Activated CD4-positive, alpha-beta T cell treated with anti-CD3 and anti-CD28 coated beads for 36 hours (primary cell): ENCODE measurements at regions of chr3 and their contacts with region 1.

Region 1: GRCh38 chr3:58237238-58237940 is at the start of gene ABHD6:
- DNase-seq: peak; percentile 88
- ATAC-seq: peak; percentile 81
- H3K4me3 Mint-ChIP-seq: peak within 1 kb of the TSS; percentile 82
- H3K27ac Mint-ChIP-seq: peak within 1 kb of the TSS; percentile 71
- H3K4me1 Mint-ChIP-seq: peaks cover 10% of the 10 kb centered on the region
- H3K27me3 Mint-ChIP-seq: peaks cover 3% of the 10 kb centered on the region
- total RNA-seq, gene ABHD6: 3.0 to 3.5 TPM

Region 2: DNA sequence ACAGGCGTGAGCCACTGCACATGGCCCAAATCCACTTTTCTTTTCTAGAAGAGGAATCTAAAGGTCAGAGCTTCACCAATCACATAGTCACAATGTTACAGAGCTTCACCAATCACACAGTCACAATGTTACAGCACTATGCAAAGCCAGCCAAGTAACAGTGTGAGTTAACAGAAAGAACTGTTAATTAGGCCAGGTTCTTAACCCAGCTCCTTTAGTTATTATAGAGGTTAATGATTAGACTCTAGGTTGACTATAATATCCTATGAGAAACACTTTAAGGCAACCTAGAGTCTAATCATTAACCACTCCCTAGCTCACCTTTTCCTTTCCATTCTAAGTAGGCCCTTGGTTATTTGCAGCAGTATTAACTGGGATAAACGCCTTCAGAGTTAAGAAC is 1608.3 kb before region 1 on chr3:
- CTCF ChIA-PET with region 1: no interaction called
- POLR2A ChIA-PET with region 1: no interaction called
- intact Hi-C with region 1: no loop called
- DNase-seq: no peak
- ATAC-seq: no peak
- H3K4me3 Mint-ChIP-seq: no peak overlapping the region
- H3K27ac Mint-ChIP-seq: no peak overlapping the region
- H3K4me1 Mint-ChIP-seq: peaks cover 5% of the 10 kb centered on the region
- H3K27me3 Mint-ChIP-seq: no peaks in the 10 kb centered on the region

Region 3: DNA sequence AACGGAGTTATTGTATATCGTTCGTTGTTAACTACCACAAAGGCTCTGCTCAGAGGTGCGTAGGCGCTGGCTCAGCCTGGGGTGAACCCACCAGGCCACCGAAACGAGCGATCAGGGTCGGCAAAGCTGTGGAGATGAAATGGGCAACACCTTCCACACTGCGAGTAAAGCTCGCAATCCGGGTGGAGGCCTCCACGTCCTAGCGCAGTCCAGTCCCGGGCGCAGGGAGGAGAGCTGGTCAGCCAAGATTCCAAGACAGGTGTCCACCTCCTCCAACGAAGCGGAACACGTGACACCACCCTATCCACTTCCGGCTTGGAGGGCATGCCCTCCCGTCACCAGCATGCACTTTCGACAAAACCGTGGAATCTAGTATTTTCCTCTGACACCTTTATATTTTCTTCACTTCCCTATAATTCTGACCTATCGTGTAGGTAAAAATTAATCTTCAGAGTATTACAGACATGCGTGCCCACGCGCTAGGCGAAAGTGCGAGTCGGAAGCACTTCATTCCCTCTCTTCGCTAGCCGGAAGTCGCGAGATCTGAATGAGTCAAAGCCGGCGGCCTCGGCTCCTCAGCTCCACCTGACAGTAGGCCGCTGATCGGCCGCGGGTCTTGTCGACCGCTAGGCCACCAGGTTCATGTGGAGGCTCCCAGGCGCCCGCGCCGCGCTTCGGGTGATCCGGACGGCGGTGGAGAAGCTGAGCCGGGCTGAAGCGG is 681.5 kb before region 1 on chr3 and contains the start of gene PDE12:
- CTCF ChIA-PET with region 1: no interaction called
- POLR2A ChIA-PET with region 1: no interaction called
- intact Hi-C with region 1: loop called in 1 of 2 experiments (anchors 5 kb)
- DNase-seq: peak; percentile 91
- ATAC-seq: peak; percentile 82
- H3K4me3 Mint-ChIP-seq: peak within 1 kb of the TSS; percentile 91
- H3K27ac Mint-ChIP-seq: peak within 1 kb of the TSS; percentile 100
- H3K4me1 Mint-ChIP-seq: peaks cover 29% of the 10 kb centered on the region
- H3K27me3 Mint-ChIP-seq: no peaks in the 10 kb centered on the region
- total RNA-seq, gene PDE12: 19.2 to 19.9 TPM

Region 4: DNA sequence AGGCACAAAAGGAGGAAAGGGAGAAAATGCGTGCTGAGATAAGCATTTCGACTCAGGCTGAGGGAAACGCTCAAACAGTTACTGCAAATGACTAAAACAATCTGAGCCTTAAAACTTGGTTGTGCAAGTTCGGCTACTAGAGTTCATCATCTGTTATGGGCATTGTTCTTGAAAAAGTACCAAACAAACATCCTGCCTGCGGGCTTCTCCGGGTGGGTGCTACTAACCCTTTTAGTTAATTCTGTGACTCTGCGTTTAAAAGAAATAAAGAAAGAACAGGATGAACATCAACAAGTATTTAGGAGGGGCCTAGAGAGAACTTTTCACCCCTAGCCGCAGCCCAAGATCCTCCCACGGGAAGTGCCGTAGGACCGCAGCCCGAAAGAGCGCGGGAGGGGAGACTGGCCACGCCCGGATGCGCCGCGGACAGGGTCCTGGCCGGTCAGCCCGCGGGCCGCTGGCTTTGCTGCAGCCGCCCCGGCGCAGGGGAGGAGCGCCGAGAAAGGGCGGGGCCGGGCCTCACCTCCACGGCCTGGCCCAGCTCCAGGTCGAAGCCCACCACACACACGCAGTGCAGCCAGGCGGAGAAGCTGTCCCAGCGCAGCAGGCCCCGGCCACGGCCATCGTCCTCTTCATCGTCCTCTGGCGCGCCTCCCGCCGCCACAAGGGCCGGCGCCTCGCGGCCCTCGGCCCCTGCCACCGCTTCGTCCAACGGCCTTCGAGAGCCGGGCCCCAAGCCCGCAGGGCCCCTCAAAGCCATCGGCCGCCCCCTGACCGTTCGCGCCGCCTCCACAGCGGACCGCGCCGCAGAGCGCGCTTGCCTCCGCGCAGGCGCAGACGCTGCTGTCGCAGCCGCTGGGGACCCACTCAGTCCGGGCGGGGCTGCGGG is 544.9 kb before region 1 on chr3 and contains the start of gene DENND6A:
- CTCF ChIA-PET with region 1: no interaction called
- POLR2A ChIA-PET with region 1: no interaction called
- intact Hi-C with region 1: loop called in 1 of 2 experiments (anchors 5 kb)
- DNase-seq: peak; percentile 98
- ATAC-seq: peak; percentile 88
- H3K4me3 Mint-ChIP-seq: peak within 1 kb of the TSS; percentile 87
- H3K27ac Mint-ChIP-seq: peak within 1 kb of the TSS; percentile 85
- H3K4me1 Mint-ChIP-seq: peaks cover 31% of the 10 kb centered on the region
- H3K27me3 Mint-ChIP-seq: no peaks in the 10 kb centered on the region
- total RNA-seq, gene DENND6A: 15.0 to 17.1 TPM

Region 5: DNA sequence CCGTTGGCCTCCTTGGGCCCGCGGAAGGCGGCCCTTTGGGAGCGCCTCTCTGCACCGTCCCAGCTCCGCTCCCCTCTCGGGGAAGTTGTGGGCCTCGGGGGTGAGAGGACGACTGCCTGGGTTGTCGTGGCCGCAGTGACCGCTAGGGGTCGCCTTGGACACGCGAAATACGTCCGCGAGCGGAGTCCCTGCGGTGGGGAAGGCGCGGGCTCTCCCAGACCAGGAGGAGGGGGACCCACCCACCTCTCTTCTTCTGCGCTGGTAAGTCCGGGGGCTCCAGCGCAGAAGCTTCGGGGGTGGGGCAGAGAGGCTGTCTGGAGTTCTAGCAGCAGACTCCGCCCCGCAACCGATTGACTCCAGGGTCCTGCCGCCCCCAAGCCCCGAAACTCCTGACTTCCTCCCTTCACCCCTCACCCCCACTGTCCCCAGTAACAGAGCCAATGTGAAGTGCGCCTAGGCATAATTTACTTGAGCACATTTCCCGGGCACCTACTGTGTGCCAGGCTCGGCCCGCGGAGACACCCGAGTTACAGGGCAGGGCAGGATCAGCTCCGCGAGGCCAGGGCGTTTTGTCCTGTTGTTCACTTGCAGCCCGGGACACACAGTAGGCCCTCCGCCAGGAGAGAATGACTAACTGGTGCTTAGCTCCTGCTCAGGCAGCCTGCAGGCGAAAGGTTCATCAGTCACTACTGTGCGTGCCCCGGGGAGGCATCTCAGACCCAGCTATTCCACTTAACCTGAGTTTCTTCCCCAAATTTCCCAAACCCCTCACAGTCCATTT is 59.5 kb before region 1 on chr3:
- CTCF ChIA-PET with region 1: interaction called, 10 read pairs
- POLR2A ChIA-PET with region 1: no interaction called
- intact Hi-C with region 1: loop called in 1 of 2 experiments (anchors 1 kb)
- DNase-seq: peak; percentile 95
- ATAC-seq: peak; percentile 86
- H3K4me3 Mint-ChIP-seq: peak overlapping the region; percentile 61
- H3K27ac Mint-ChIP-seq: peak overlapping the region; percentile 31
- H3K4me1 Mint-ChIP-seq: peaks cover 13% of the 10 kb centered on the region
- H3K27me3 Mint-ChIP-seq: peaks cover 4% of the 10 kb centered on the region

Region 6: DNA sequence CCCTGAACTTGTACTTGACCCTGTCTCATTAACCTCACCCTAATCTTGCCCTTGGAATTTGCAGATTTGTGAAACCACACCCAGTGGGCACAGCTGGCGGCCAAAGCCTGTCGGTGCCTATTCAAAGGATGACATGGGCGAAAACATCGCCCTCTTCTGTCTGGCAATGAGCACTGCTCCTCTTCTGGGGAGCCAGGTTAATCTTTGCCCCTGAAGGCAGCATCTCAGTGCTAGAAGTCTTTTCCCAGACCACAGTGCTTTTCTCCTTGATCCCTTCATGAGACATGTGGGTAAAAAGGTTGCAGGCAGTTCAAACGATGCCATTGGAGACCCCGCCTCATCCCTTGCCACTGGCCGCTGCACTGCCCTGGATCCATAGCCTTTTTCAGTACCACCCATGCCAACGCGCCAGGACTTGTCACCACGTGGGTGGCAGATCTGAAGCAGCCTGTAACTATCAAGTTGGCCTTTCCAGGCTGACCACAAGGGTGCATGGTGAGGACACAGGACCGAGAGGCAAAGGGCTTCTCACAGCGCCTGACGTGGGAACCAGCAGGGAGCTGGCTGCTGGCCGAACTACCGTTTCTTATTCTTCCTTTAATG is 20.1 kb before region 1 on chr3:
- CTCF ChIA-PET with region 1: interaction called, 11 read pairs
- POLR2A ChIA-PET with region 1: interaction called, 3 read pairs
- intact Hi-C with region 1: loop called in 1 of 2 experiments (anchors 1 kb)
- DNase-seq: peak; percentile 76
- ATAC-seq: peak; percentile 34
- H3K4me3 Mint-ChIP-seq: peak overlapping the region; percentile 9
- H3K27ac Mint-ChIP-seq: no peak overlapping the region
- H3K4me1 Mint-ChIP-seq: peaks cover 36% of the 10 kb centered on the region
- H3K27me3 Mint-ChIP-seq: peaks cover 4% of the 10 kb centered on the region

Region 7: DNA sequence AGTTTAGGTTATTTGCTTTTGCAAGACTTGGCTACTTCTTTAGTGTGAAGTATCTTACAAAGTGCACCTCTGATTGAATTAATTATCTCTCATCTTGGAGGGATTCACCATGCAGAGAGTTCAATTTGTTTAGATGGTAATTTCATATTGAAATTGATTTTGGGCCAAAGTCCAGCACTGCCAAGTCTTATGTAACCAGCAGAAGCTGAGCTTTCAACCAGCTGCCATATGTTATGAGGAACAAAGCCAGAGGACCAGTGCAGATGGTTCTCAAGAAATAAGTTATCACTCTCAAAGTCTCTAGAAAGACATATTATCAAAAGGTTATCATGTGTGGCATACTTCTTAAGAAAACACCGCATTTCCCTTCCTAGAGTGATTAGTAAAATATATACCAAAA is 29.2 kb after region 1 on chr3:
- CTCF ChIA-PET with region 1: no interaction called
- POLR2A ChIA-PET with region 1: no interaction called
- intact Hi-C with region 1: no loop called
- DNase-seq: no peak
- ATAC-seq: no peak
- H3K4me3 Mint-ChIP-seq: no peak overlapping the region
- H3K27ac Mint-ChIP-seq: no peak overlapping the region
- H3K4me1 Mint-ChIP-seq: no peaks in the 10 kb centered on the region
- H3K27me3 Mint-ChIP-seq: no peaks in the 10 kb centered on the region

Region 8: DNA sequence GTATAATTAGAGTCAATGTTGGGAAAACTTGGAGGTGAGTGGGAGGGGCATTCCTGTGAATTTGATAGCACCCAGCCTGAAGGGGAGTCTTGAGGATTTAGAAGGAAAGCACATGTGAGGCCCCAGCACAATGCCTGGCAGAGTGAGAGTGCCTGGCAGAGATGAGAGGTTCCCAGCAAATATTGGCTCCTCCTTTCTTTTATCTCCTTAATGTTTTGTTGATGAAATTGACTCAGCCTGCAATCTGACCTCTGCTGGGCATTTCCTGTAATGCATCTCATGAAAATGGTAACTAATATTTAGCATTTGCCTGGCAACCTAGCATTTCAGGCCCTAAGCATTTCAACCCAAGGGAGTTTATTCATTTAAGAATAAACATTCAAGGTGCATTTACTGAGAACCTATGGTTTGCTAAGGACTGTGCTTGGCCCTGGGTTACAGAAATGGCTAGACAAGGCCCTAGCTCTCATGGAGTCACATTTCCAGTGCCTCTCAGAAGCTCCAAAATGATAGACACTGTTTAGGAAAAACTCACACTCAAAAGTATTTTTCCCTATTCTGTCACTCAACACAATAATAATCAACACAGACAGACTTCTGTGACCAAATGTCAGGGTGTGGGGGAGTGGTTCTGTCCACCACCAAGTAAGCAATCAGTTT is 177.3 kb after region 1 on chr3:
- CTCF ChIA-PET with region 1: no interaction called
- POLR2A ChIA-PET with region 1: no interaction called
- intact Hi-C with region 1: loop called in 1 of 2 experiments (anchors 1 kb)
- DNase-seq: peak; percentile 56
- ATAC-seq: peak; percentile 85
- H3K4me3 Mint-ChIP-seq: no peak overlapping the region
- H3K27ac Mint-ChIP-seq: no peak overlapping the region
- H3K4me1 Mint-ChIP-seq: peaks cover 4% of the 10 kb centered on the region
- H3K27me3 Mint-ChIP-seq: no peaks in the 10 kb centered on the region

Region 9: DNA sequence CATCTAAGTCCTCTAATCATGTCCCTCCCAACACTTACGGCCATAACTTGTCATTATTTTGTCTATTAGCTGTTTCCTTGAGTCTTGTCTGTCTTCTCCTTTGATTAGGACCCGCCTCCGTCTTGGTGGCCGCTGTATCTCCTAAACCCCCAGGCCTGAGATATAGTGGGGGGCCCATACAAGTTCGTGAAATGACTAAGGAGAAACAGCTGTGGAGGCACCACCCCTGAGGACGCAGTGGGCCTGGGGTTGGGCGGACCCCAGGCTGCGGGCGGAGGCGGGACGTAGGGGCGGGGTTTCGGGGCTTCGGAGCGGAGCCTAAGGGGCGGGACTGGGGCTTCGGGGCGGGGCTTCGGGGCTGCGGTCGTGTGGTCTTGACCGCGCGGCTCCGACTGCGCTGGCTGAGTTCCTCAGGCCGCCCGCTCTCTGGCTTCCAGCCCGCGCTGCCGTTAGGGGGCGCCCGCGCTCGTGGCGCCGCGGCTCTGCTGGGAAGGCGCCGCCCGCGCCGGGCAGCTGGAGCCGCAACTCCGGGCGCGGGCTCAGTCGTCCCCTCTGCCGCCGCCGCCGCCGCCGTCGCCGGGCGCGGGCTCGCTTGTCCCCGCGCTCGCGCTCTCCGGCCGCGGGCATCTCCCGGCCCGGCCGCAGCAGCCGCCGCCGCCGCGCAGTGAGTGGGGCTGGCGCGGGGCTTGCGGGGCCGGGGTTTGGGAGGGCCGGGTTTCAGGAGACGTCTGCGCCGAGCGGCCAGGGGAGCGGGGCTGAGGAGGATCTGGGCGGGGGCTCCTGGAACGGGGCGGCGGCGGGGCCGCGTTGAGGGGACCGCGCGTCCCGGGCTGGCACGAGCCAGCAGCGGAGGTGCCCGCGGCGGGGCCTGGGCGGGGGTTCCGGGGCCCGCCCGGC is 254.4 kb after region 1 on chr3 and contains the start of gene KCTD6:
- CTCF ChIA-PET with region 1: no interaction called
- POLR2A ChIA-PET with region 1: no interaction called
- intact Hi-C with region 1: loop called in 1 of 2 experiments (anchors 5 kb)
- DNase-seq: peak; percentile 91
- ATAC-seq: peak; percentile 90
- H3K4me3 Mint-ChIP-seq: peak within 1 kb of the TSS; percentile 84
- H3K27ac Mint-ChIP-seq: peak within 1 kb of the TSS; percentile 90
- H3K4me1 Mint-ChIP-seq: peaks cover 45% of the 10 kb centered on the region
- H3K27me3 Mint-ChIP-seq: peaks cover 6% of the 10 kb centered on the region
- total RNA-seq, gene KCTD6: 7.1 to 7.9 TPM